AG04450 (cell line): ENCODE measurements at regions of chr6 and their contacts with region 1.

Region 1: DNA sequence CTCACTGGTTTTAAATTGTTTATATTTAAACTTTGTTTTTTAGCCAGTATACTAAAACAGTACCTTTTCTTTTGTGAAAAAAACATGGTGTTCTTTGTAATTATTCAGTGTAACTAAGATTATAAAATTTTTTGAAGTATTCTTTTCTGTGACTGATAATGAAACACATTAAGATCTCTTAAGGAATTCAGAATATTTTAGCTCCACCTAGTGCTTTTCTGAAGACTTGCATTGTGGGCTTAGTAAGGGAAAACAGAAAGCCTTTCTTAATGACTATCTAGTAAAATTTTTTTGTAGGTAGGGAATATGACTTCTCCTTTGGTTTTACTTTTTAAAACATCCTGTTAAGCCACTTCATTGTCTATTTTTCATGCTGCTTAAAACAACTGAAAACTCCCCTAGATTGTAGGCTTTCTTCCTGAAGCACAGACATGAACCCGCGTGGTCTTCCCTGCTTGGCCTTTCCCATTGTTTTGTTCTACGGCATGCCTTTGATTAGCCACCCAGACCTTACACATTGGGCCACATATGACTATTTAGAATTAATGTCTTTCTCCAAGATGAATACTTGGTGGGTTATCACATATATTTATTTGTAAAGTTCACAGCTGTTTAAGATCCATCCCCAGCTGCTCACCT is 72.1 kb downstream of the AFDN start:
- DNase-seq: peak; percentile 3
- H3K4me3 ChIP-seq: no peak overlapping the region
- H3K27ac ChIP-seq: no peak overlapping the region
- H3K27me3 ChIP-seq: no peaks in the 10 kb centered on the region
- CTCF ChIP-seq: peak; percentile 81

Region 2: GRCh38 chr6:167524261-167525111 is 374.3 kb before region 1 on chr6:
- CTCF ChIA-PET with region 1: no interaction called
- POLR2A ChIA-PET with region 1: no interaction called
- DNase-seq: no peak
- H3K4me3 ChIP-seq: no peak overlapping the region
- H3K27ac ChIP-seq: no peak overlapping the region
- H3K27me3 ChIP-seq: no peaks in the 10 kb centered on the region
- CTCF ChIP-seq: no peak

Region 3: GRCh38 chr6:167827595-167828324 is 71.0 kb before region 1 on chr6:
- CTCF ChIA-PET with region 1: interaction called, 19 read pairs
- POLR2A ChIA-PET with region 1: interaction called, 3 read pairs
- DNase-seq: no peak
- H3K4me3 ChIP-seq: peak overlapping the region; percentile 72
- H3K27ac ChIP-seq: no peak overlapping the region
- H3K27me3 ChIP-seq: peaks cover 2% of the 10 kb centered on the region
- CTCF ChIP-seq: no peak

Region 4: DNA sequence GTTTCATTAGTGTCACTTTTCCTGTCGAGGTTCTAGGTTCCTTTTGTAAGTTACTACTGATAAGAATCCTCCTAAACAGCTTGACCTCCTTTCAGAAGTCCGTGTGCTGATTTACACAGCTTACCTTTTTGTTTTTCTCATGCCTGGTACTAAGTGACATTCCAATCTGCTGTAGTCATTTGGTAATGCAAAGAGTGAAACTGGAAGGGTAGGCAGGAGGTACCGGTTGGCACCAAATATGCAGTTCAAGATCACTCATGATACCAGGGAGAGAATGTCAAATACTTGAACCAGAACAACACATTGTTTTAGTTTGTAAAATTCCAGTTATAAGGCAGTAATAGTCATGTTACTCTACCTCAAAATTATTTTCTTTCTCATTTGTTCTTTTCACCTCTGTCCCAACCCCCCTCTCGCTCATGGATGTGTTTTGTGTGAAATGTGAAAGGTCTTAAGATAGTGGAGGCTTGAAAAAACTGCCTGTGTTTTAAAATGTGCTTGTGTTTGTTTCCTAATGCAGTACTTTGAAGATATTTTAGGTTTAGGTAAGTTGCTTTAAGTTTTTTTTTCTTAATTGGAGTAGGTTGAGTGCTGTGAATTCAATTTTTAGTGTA is 48.8 kb before region 1 on chr6:
- CTCF ChIA-PET with region 1: no interaction called
- POLR2A ChIA-PET with region 1: no interaction called
- DNase-seq: no peak
- H3K4me3 ChIP-seq: no peak overlapping the region
- H3K27ac ChIP-seq: no peak overlapping the region
- H3K27me3 ChIP-seq: no peaks in the 10 kb centered on the region
- CTCF ChIP-seq: no peak